Thyroid gland (tissue), 4 donors: ENCODE measurements at regions of chr22 and their contacts with region 1.

Region 1: DNA sequence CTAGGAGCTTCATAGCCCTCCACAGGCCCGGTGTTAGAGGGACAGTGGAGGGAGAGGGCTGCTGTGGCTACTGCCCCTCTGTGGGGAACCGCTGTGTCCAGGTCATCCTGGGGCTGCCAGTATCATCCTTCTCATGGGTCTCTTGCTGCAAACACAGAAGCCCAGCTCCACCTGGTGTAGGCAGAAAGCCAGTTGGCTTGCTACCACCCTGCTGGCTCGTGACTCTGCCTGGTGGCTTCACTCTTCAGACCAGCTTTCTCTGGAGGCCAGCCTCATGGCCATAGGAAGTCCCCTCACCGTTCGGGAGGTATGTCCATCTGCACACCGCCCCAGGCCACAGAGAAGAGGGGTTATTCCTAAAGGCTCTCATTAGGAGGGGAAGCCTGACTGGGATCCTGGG is 19.4 kb upstream of the SUSD2 start:
- DNase-seq: peak; percentile 48 to 72
- H3K4me3 ChIP-seq: no peak overlapping the region
- H3K27ac ChIP-seq: peak overlapping the region in 1 of 3 donors; percentile 24
- H3K4me1 ChIP-seq: peaks cover 32 to 54% of the 10 kb centered on the region in 2 donors
- H3K27me3 ChIP-seq: no peaks in the 10 kb centered on the region
- CTCF ChIP-seq: no peak
- POLR2A ChIP-seq: no peak

Region 2: DNA sequence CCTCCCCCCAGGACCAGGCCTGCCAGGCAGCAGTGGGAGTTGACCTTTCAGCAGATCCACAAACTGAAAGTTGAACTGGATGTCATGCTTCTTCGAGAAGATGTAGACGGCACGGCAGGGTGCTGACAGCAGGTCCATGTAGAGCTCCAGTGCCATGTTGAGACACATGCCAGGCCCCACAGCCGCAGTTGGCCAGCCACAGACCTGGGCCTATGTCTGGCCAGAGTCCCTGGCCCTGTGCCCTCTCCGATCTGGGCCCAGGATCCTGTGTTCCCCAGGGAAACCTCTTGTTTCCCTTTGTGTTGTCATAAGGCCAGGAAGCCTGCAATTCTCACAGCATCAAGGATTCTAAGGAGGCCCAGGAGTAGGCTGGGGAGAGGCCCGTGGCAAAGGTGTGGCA is 156.7 kb before region 1 on chr22 and contains the start of gene GSTT4:
- intact Hi-C with region 1: loop called (anchors 5 kb)
- DNase-seq: peak; percentile 73 to 74
- H3K4me3 ChIP-seq: no peak within 1 kb of the TSS
- H3K27ac ChIP-seq: peak within 1 kb of the TSS in 2 of 3 donors; percentile 35 to 47
- H3K4me1 ChIP-seq: peaks cover 4 to 9% of the 10 kb centered on the region in 2 donors
- H3K27me3 ChIP-seq: no peaks in the 10 kb centered on the region
- CTCF ChIP-seq: no peak
- POLR2A ChIP-seq: no peak
- total RNA-seq, gene GSTT4: not detected

Region 3: DNA sequence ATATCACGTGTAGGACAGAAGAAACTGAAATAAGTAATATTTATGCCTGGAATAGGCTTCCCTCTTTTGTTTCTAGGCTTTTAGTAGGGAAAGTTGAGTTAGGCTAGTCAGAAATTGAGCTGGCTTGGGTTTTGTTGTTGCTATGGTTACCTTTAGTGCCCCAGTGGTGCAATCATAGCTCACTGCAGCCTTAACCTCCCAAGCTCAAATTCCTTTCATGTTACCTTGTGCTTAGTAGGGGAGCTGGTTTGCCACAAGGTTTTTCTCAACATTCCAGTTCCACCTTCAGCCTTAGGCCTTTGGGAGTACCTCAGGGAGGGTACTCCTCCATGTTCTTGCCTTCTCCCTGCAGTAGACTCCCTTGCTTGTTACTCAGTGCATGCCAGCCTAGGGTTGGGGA is 49.7 kb before region 1 on chr22:
- intact Hi-C with region 1: loop called (anchors 5 kb)
- DNase-seq: no peak
- H3K4me3 ChIP-seq: no peak overlapping the region
- H3K27ac ChIP-seq: no peak overlapping the region
- H3K4me1 ChIP-seq: peaks cover 0 to 9% of the 10 kb centered on the region in 2 donors
- H3K27me3 ChIP-seq: no peaks in the 10 kb centered on the region
- CTCF ChIP-seq: no peak
- POLR2A ChIP-seq: no peak

Region 4: GRCh38 chr22:24244101-24244787 is 82.3 kb after region 1 on chr22:
- intact Hi-C with region 1: no loop called
- DNase-seq: peak; percentile 52 to 54
- H3K4me3 ChIP-seq: peak overlapping the region in 1 of 3 donors; percentile 31
- H3K27ac ChIP-seq: peak overlapping the region; percentile 85 to 100 (median 95)
- H3K4me1 ChIP-seq: peaks cover 34 to 59% of the 10 kb centered on the region in 2 donors
- H3K27me3 ChIP-seq: no peaks in the 10 kb centered on the region
- CTCF ChIP-seq: no peak
- POLR2A ChIP-seq: no peak